Activated CD4-positive, alpha-beta memory T cell treated with anti-CD3 and anti-CD28 coated beads, Interleukin-2, amount 10 ng/mL, durations not matched to agents 7 days and 5 days (primary cell): ENCODE measurements at regions of chr6 and their contacts with region 1.

Region 1: GRCh38 chr6:90425161-90425641 is 128.6 kb upstream of the BACH2 start:
- DNase-seq: peak; percentile 33
- H3K4me3 Mint-ChIP-seq: peak overlapping the region; percentile 72
- H3K27ac Mint-ChIP-seq: peak overlapping the region; percentile 91
- H3K4me1 Mint-ChIP-seq: peaks cover 25% of the 10 kb centered on the region
- H3K27me3 Mint-ChIP-seq: no peaks in the 10 kb centered on the region

Region 2: GRCh38 chr6:90296346-90297114 is 128.7 kb before region 1 on chr6 and contains the start of gene BACH2:
- CTCF ChIA-PET with region 1: interaction called, 5 read pairs
- POLR2A ChIA-PET with region 1: interaction called, 13 read pairs
- DNase-seq: peak; percentile 95
- H3K4me3 Mint-ChIP-seq: peak within 1 kb of the TSS; percentile 87
- H3K27ac Mint-ChIP-seq: peak within 1 kb of the TSS; percentile 82
- H3K4me1 Mint-ChIP-seq: peaks cover 27% of the 10 kb centered on the region
- H3K27me3 Mint-ChIP-seq: peaks cover 44% of the 10 kb centered on the region
- total RNA-seq, gene BACH2: 30.3 to 31.1 TPM

Region 3: GRCh38 chr6:90413867-90414266 is 11.3 kb before region 1 on chr6:
- CTCF ChIA-PET with region 1: interaction called, 54 read pairs
- POLR2A ChIA-PET with region 1: interaction called, 105 read pairs
- DNase-seq: peak; percentile 88
- H3K4me3 Mint-ChIP-seq: peak overlapping the region; percentile 82
- H3K27ac Mint-ChIP-seq: peak overlapping the region; percentile 97
- H3K4me1 Mint-ChIP-seq: peaks cover 86% of the 10 kb centered on the region
- H3K27me3 Mint-ChIP-seq: peaks cover 2% of the 10 kb centered on the region

Region 4: DNA sequence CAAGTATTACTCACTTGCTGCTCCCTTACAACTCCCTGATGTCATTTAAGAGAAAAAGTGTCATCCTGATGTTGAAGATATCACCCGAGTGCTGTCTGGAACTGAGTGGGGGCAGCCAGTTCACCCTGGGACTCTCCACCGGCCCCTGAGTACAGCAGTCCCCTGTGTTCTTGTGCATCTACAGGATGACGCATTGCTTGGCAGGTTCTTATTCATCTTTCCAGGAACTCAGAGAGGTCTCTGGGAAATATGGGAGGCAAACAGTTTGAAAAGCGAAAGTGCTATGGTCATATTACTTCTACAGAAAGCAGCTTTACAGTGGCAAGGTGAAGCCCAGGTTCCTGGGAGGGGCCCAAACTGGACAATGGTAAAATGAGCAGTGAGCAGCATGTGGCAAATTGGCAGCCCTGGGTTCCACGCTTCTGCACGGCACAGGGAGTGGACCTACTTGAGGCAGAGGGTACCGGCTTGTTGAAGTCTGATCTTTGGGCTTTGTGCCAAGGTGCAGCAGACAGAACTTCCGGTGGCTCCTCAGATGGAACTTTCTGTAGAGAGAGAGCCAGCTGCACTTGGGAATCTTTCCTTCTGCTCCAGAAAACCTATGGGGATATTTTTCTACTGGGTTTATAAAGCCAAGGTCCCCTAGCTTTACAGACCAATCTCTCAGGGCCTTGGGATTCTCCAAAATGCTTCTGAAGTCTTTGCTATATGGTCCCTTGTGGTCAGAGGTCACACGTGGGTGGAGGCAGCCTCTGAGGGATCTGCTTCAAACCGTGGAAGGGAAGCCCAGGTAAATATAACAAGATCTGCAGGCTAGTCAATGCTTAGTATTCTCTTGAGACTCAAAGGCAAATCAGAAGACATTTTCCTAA is 33.4 kb after region 1 on chr6:
- CTCF ChIA-PET with region 1: interaction called, 12 read pairs
- POLR2A ChIA-PET with region 1: interaction called, 71 read pairs
- DNase-seq: peak; percentile 82
- H3K4me3 Mint-ChIP-seq: peak overlapping the region; percentile 56
- H3K27ac Mint-ChIP-seq: peak overlapping the region; percentile 89
- H3K4me1 Mint-ChIP-seq: peaks cover 74% of the 10 kb centered on the region
- H3K27me3 Mint-ChIP-seq: no peaks in the 10 kb centered on the region

Region 5: DNA sequence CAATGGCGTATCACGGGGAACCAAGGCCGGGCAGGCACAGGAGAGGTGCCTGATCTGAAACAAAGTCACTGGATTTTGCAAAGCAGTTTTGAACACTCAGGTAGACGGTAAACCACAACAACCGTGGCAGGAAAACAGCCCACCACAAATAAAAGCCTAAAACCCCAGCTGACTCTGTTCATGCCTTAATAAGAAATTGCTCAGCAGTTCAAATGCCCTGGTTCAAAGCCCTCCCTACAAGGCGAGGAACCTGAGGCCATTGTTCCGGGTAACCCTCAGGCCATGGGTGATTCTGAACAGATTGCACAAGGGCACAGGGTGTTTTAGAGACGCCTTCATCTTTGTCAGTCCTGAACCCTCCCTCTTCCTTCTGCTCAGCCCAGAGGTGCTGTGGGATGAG is 47.5 kb after region 1 on chr6:
- CTCF ChIA-PET with region 1: interaction called, 14 read pairs
- POLR2A ChIA-PET with region 1: interaction called, 65 read pairs
- DNase-seq: peak; percentile 75
- H3K4me3 Mint-ChIP-seq: peak overlapping the region; percentile 70
- H3K27ac Mint-ChIP-seq: peak overlapping the region; percentile 92
- H3K4me1 Mint-ChIP-seq: peaks cover 98% of the 10 kb centered on the region
- H3K27me3 Mint-ChIP-seq: peaks cover 12% of the 10 kb centered on the region

Region 6: DNA sequence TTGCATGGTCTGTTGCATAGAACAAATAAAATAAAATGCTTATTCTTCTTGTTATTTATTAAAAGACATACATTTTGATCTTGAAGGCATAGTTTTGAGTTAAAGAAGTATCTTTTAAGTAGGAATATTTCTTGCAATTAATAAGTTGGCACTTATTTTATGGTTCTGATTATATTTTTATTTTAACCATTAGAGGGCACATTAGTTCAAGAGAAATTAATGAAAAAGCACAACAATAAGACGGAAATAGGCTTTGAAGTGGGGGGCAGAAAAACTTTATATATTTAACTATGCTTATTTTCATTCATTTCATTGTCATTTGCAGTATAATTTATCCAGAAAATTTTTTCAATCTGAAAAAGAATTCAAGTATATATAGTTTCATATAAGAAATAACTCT is 205.8 kb after region 1 on chr6:
- CTCF ChIA-PET with region 1: no interaction called
- POLR2A ChIA-PET with region 1: no interaction called
- DNase-seq: no peak
- H3K4me3 Mint-ChIP-seq: no peak overlapping the region
- H3K27ac Mint-ChIP-seq: no peak overlapping the region
- H3K4me1 Mint-ChIP-seq: no peaks in the 10 kb centered on the region
- H3K27me3 Mint-ChIP-seq: peaks cover 17% of the 10 kb centered on the region

Region 7: GRCh38 chr6:92110403-92110802 is 1685.2 kb after region 1 on chr6:
- CTCF ChIA-PET with region 1: no interaction called
- POLR2A ChIA-PET with region 1: no interaction called
- DNase-seq: no peak
- H3K4me3 Mint-ChIP-seq: no peak overlapping the region
- H3K27ac Mint-ChIP-seq: no peak overlapping the region
- H3K4me1 Mint-ChIP-seq: no peaks in the 10 kb centered on the region
- H3K27me3 Mint-ChIP-seq: no peaks in the 10 kb centered on the region